ENCODE measurements at regions of chr17 and their contacts with region 1.

Region 1: GRCh38 chr17:64145757-64146417 is 15.9 kb upstream of the ERN1 start:
- DNase-seq: peak; percentile 92 to 99 (median 94)
- ATAC-seq: peak; percentile 94
- H3K4me3 ChIP-seq: peak overlapping the region; percentile 64
- H3K27ac ChIP-seq: peak overlapping the region; percentile 93
- H3K4me1 ChIP-seq: peaks cover 9 to 17% of the 10 kb centered on the region in 2 experiments; a peak in 4 of 5 replicates
- H3K27me3 ChIP-seq: no peaks in the 10 kb centered on the region
- CTCF ChIP-seq: peak in 2 of 3 experiments; percentile 9 to 13; a peak in 1 of 6 replicates
- EP300 ChIP-seq: peak; percentile 2; the same call in 1 of the 2 replicates
- POLR2A ChIP-seq: peak; percentile 99
- RAD21 ChIP-seq: no peak

Region 2: GRCh38 chr17:64048805-64049204 is 97.1 kb before region 1 on chr17:
- CTCF ChIA-PET with region 1: no interaction called
- POLR2A ChIA-PET with region 1: no interaction called
- in situ Hi-C with region 1: no loop called
- intact Hi-C with region 1: no loop called
- DNase-seq: no peak
- ATAC-seq: no peak
- H3K4me3 ChIP-seq: no peak overlapping the region
- H3K27ac ChIP-seq: no peak overlapping the region
- H3K4me1 ChIP-seq: no peaks in the 10 kb centered on the region; a peak in 1 of 5 replicates
- H3K27me3 ChIP-seq: no peaks in the 10 kb centered on the region
- CTCF ChIP-seq: no peak
- EP300 ChIP-seq: no peak
- POLR2A ChIP-seq: no peak
- RAD21 ChIP-seq: no peak

Region 3: GRCh38 chr17:64117981-64118979 is 27.6 kb before region 1 on chr17:
- CTCF ChIA-PET with region 1: no interaction called
- POLR2A ChIA-PET with region 1: interaction called, 10 read pairs
- in situ Hi-C with region 1: no loop called
- intact Hi-C with region 1: no loop called
- DNase-seq: peak; percentile 48 to 67 (median 58)
- ATAC-seq: peak; percentile 85
- H3K4me3 ChIP-seq: no peak overlapping the region
- H3K27ac ChIP-seq: no peak overlapping the region
- H3K4me1 ChIP-seq: peaks cover 6 to 8% of the 10 kb centered on the region in 2 experiments
- H3K27me3 ChIP-seq: no peaks in the 10 kb centered on the region
- CTCF ChIP-seq: no peak
- EP300 ChIP-seq: no peak
- POLR2A ChIP-seq: no peak
- RAD21 ChIP-seq: no peak

Region 4: DNA sequence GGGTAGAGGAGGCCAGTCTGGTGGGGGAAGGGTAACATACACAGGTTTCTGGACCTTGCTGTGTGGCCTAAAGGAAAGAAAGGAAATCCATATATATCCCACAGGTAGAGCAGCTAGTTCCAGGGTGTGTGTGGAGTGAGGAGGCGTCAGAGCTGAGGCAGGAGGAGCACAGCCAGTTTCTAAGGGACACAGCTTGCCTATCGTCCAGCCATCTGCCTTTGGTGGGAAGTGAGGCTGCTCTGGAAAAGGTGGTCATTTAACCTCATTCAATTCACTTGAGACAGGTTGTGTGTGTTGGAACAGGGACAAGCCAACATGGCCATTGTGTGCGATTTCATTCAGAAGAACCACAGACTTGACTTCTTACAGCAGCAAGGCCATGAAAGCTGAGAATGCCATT is 21.0 kb after region 1 on chr17:
- CTCF ChIA-PET with region 1: no interaction called
- POLR2A ChIA-PET with region 1: interaction called, 15 read pairs
- in situ Hi-C with region 1: no loop called
- intact Hi-C with region 1: no loop called
- DNase-seq: no peak
- ATAC-seq: no peak
- H3K4me3 ChIP-seq: no peak overlapping the region
- H3K27ac ChIP-seq: no peak overlapping the region
- H3K4me1 ChIP-seq: no peaks in the 10 kb centered on the region
- H3K27me3 ChIP-seq: no peaks in the 10 kb centered on the region
- CTCF ChIP-seq: no peak
- EP300 ChIP-seq: no peak
- POLR2A ChIP-seq: no peak
- RAD21 ChIP-seq: no peak

Region 5: DNA sequence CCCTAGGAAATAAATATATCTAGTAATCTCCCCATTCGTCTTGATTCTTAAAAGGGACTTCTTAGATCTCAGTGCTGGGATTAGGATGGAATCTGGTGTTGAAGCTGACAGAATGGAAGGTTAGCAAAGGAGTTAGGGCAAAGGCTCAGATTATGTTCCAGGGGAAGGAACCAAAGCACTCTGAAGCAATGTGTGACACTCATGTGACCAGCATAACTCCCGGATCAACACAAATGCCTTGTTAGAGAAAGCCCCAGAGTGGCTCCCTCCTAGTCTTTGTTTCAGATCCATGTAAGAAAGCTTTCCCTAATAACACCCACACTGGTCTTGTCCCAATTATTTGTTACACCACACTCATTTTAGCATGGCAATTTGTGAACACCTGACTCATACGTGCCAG is 46.7 kb after region 1 on chr17:
- CTCF ChIA-PET with region 1: no interaction called
- POLR2A ChIA-PET with region 1: interaction called, 10 read pairs
- in situ Hi-C with region 1: no loop called
- intact Hi-C with region 1: no loop called
- DNase-seq: no peak
- ATAC-seq: no peak
- H3K4me3 ChIP-seq: no peak overlapping the region
- H3K27ac ChIP-seq: no peak overlapping the region
- H3K4me1 ChIP-seq: no peaks in the 10 kb centered on the region; a peak in 2 of 5 replicates
- H3K27me3 ChIP-seq: no peaks in the 10 kb centered on the region
- CTCF ChIP-seq: no peak
- EP300 ChIP-seq: no peak
- POLR2A ChIP-seq: no peak
- RAD21 ChIP-seq: no peak

Region 6: GRCh38 chr17:64262417-64263260 is 116.8 kb after region 1 on chr17 and contains the start of gene TEX2:
- CTCF ChIA-PET with region 1: no interaction called
- POLR2A ChIA-PET with region 1: interaction called, 5 read pairs
- in situ Hi-C with region 1: no loop called
- intact Hi-C with region 1: loop called (anchors 5 kb)
- DNase-seq: peak; percentile 45 to 62 (median 52)
- ATAC-seq: peak; percentile 69
- H3K4me3 ChIP-seq: peak within 1 kb of the TSS; percentile 94
- H3K27ac ChIP-seq: peak within 1 kb of the TSS; percentile 84
- H3K4me1 ChIP-seq: peaks cover 11 to 27% of the 10 kb centered on the region in 2 experiments; a peak in 4 of 5 replicates
- H3K27me3 ChIP-seq: peaks cover 3 to 6% of the 10 kb centered on the region in 2 experiments; a peak in 2 of 5 replicates
- CTCF ChIP-seq: no peak
- EP300 ChIP-seq: no peak
- POLR2A ChIP-seq: peak; percentile 59
- RAD21 ChIP-seq: no peak
- polyA plus RNA-seq, gene TEX2: 4.1 to 4.8 TPM

Region 7: GRCh38 chr17:64281962-64282727 is 136.3 kb after region 1 on chr17:
- CTCF ChIA-PET with region 1: no interaction called
- POLR2A ChIA-PET with region 1: interaction called, 8 read pairs
- in situ Hi-C with region 1: loop called (anchors 5 kb)
- intact Hi-C with region 1: loop called (anchors 2 kb)
- DNase-seq: peak; percentile 73 to 81 (median 80)
- ATAC-seq: peak; percentile 80
- H3K4me3 ChIP-seq: no peak overlapping the region
- H3K27ac ChIP-seq: no peak overlapping the region
- H3K4me1 ChIP-seq: peaks cover 0 to 3% of the 10 kb centered on the region in 2 experiments; a peak in 1 of 5 replicates
- H3K27me3 ChIP-seq: no peaks in the 10 kb centered on the region
- CTCF ChIP-seq: peak; percentile 79 to 92 (median 88)
- EP300 ChIP-seq: no peak
- POLR2A ChIP-seq: no peak
- RAD21 ChIP-seq: peak; percentile 84